CD14-positive monocyte (primary cell): ENCODE measurements at regions of chr1 and their contacts with region 1.

Region 1: DNA sequence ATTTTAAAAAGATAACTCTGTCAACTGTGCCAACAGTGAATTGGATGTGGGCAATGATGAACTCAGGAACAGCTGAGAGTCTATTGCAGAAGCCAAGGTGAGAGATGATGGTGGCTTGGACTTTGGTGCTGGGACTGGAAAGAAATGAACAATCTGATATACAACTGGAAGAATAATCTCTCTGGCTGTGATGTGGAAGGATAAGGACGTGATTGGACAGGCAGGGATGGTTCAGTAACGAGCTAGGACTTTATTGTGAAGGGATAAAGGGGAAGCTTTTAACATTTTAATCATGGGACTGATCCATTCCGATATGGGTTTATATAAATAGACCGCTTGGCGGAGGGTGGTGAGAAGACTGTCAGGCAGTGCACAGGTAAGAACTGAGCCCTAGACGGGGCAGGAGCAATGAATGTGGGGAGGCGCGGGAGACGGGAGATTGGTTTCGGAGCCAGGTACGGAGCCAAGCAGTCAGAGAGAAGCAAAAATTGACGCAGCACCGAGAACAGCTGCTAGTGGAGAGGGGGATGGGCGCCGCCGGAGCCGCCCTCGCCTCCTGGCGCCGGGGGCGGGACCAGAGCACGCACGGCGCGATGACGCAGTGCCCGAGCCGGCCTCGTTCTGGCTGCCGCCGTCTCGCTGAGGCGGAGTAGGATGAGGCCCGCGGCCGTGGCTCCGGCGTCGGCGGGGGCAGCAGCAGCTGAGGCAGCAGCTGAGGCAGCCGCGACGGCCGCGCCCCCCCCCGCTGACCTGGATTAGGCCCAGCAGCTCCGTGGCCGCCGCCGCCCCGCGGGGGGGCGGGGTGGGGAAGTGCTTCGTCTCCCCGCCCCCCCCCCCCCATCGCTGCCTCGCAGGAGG is at the start of gene RNF11:
- DNase-seq: peak; percentile 84 to 88 (median 86)
- H3K4me3 ChIP-seq: peak within 1 kb of the TSS; percentile 72 to 98 (median 92)
- H3K4me3 Mint-ChIP-seq: peak within 1 kb of the TSS; percentile 88 to 99
- H3K27ac ChIP-seq: peak within 1 kb of the TSS; percentile 72 to 99
- H3K27ac Mint-ChIP-seq: peak within 1 kb of the TSS in 6 of 7 donors; percentile 88 to 100 (median 96)
- H3K4me1 ChIP-seq: peaks cover 26 to 37% of the 10 kb centered on the region in 2 donors
- H3K4me1 Mint-ChIP-seq: peaks cover 22% of the 10 kb centered on the region
- H3K27me3 ChIP-seq: no peaks in the 10 kb centered on the region
- H3K27me3 Mint-ChIP-seq: peaks cover 0 to 6% (median 0%) of the 10 kb centered on the region in 3 donors
- CTCF ChIP-seq: no peak
- polyA plus RNA-seq, gene RNF11: 25.3 to 30.4 (median 28.4) TPM

Region 2: DNA sequence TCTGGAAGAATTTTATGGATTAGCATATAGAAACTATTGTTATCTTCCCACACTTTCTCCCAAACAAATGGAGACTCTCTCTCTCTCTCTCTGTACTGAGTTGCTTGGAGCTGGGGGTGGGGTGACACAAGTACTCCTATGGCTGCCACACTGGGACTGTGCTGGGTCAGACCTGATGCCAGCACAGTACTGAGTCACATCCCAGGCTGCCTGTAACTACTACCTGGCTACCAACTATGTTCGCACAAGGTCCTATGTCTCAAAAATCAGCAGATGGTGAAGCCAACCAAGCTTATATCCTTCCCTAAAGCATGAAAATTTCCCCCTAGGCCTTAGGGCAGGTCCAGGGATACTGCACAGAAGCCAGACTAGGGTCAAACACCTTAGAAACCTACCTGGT is 342.4 kb before region 1 on chr1:
- intact Hi-C with region 1: no loop called
- DNase-seq: no peak
- H3K4me3 ChIP-seq: no peak overlapping the region
- H3K4me3 Mint-ChIP-seq: no peak overlapping the region
- H3K27ac ChIP-seq: no peak overlapping the region
- H3K27ac Mint-ChIP-seq: no peak overlapping the region
- H3K4me1 ChIP-seq: no peaks in the 10 kb centered on the region
- H3K4me1 Mint-ChIP-seq: peaks cover 2% of the 10 kb centered on the region
- H3K27me3 ChIP-seq: no peaks in the 10 kb centered on the region
- H3K27me3 Mint-ChIP-seq: no peaks in the 10 kb centered on the region
- CTCF ChIP-seq: no peak

Region 3: DNA sequence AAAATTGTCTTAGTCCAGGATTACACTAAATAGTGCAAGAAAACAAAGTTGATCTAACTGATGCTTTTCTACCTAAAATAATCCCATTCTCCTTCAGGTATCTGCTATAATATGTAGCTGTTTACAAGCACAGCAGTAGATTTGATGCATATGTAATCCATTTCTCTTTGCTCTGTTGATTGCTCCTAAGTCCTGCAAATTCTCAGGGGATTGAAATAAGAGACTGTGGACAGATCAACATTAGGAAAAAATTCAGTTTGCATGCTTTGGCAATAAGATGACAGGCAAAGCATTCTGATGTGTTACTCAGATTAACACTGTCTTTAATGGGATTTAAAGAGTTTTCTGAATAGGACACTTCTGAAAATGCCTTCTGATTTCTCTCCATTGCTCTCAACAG is 34.8 kb after region 1 on chr1:
- intact Hi-C with region 1: loop called in 1 of 2 experiments (anchors 5 kb)
- DNase-seq: no peak
- H3K4me3 ChIP-seq: no peak overlapping the region
- H3K4me3 Mint-ChIP-seq: no peak overlapping the region
- H3K27ac ChIP-seq: no peak overlapping the region
- H3K27ac Mint-ChIP-seq: no peak overlapping the region
- H3K4me1 ChIP-seq: peaks cover 32 to 34% of the 10 kb centered on the region in 2 donors
- H3K4me1 Mint-ChIP-seq: peaks cover 34% of the 10 kb centered on the region
- H3K27me3 ChIP-seq: no peaks in the 10 kb centered on the region
- H3K27me3 Mint-ChIP-seq: no peaks in the 10 kb centered on the region
- CTCF ChIP-seq: no peak

Region 4: GRCh38 chr1:51282605-51283004 is 46.7 kb after region 1 on chr1:
- intact Hi-C with region 1: no loop called
- DNase-seq: no peak
- H3K4me3 ChIP-seq: no peak overlapping the region
- H3K4me3 Mint-ChIP-seq: no peak overlapping the region
- H3K27ac ChIP-seq: no peak overlapping the region
- H3K27ac Mint-ChIP-seq: no peak overlapping the region
- H3K4me1 ChIP-seq: no peaks in the 10 kb centered on the region
- H3K4me1 Mint-ChIP-seq: peaks cover 5% of the 10 kb centered on the region
- H3K27me3 ChIP-seq: no peaks in the 10 kb centered on the region
- H3K27me3 Mint-ChIP-seq: no peaks in the 10 kb centered on the region
- CTCF ChIP-seq: no peak